HepG2 (cell line): ENCODE measurements at regions of chr7 and their contacts with region 1.

Region 1: DNA sequence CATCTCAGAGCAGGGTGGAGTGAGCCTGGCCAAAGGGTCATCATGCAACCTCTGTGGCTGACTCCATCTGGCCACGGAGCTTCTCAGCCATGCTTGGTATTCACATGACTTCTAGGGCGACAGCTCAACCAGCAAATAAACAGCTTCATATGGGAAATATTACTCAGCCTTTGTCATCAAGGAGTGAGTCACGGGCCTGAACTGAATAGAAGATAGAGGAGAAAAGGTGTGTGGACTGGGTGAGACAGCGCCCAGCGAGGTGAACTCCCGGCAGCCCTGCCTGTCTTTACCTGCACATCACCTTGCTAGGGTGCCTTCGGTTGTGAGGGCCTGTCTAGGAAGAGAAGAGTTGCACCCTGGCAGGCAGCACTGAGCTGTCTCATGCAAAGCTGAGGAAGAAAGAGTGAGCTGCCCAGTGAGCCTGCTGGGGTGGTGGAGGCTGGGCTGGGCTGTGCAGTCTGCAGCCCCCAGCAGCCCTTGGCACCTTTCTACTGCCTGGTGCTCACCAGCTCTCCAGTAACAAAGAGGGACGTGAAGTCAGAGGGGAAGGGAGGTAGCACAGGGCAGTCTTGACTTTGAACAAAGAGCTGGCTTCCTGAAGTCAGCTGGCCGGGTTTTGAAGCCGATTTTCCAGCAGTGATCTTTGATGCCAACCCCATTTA is 114.2 kb downstream of the EGFR start:
- DNase-seq: peak; percentile 75
- ATAC-seq: peak; percentile 54
- H3K4me3 ChIP-seq: peak overlapping the region in 2 of 3 experiments; percentile 2 to 63; a peak in 3 of 6 replicates
- H3K27ac ChIP-seq: peak overlapping the region; percentile 52
- H3K4me1 ChIP-seq: peaks cover 59% of the 10 kb centered on the region
- H3K27me3 ChIP-seq: no peaks in the 10 kb centered on the region
- CTCF ChIP-seq: no peak
- EP300 ChIP-seq: peak in 1 of 2 experiments; percentile 48; a peak in 1 of 4 replicates
- POLR2A ChIP-seq: no peak; a peak in 1 of 4 replicates
- RAD21 ChIP-seq: no peak

Region 2: DNA sequence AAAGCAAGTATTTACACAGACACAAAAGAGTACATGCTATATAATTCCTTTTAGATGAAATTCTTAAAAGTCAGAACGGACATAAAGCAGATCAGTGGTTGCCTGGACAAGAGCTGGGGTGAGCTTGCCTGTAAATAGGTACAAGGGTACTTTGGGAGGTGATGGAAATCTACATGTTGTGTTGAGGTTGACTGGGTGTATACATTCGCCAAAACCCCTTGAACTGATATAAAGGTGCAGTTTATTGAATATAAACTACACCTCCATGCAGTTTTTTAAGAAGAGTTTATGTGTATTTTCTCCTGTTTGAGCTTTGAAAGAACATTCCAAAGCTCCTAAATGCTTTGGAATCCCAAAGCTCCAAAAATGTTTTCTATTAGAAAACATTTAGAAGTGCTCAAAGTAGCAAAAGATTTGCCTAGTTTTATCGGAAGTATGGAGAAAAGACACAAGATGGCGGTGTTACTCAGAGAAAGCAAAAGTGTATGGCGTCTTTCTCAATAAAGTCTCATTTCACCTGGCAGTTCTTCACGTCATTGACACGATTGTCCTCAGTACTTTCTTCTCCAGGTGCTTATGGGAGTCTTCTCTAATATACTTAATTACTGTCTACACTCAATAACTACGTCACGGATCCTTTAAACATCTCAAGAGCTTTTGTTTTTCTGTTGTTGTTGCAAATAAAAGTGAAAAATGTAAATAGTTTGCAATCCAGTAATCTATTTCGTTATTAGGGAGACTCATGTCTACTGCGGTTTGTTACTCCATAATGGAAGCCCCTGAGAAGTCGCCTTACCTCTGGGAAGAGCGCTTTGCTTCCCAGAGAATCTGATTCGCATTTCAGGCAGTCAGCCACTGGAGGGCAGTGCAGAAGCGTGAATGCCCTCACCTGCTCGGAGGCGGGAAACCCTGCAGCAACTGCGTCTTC is 359.3 kb before region 1 on chr7:
- CTCF ChIA-PET with region 1: no interaction called
- POLR2A ChIA-PET with region 1: no interaction called
- in situ Hi-C with region 1: no loop called
- intact Hi-C with region 1: loop called (anchors 5 kb)
- DNase-seq: peak; percentile 73
- ATAC-seq: peak; percentile 96
- H3K4me3 ChIP-seq: peak overlapping the region in 1 of 3 experiments; percentile 19; a peak in 3 of 6 replicates
- H3K27ac ChIP-seq: no peak overlapping the region
- H3K4me1 ChIP-seq: peaks cover 4% of the 10 kb centered on the region; the same call in 1 of the 2 replicates
- H3K27me3 ChIP-seq: peaks cover 4 to 22% of the 10 kb centered on the region in 2 experiments; a peak in 2 of 5 replicates
- CTCF ChIP-seq: peak; percentile 92
- EP300 ChIP-seq: no peak
- POLR2A ChIP-seq: no peak
- RAD21 ChIP-seq: peak; percentile 84

Region 3: DNA sequence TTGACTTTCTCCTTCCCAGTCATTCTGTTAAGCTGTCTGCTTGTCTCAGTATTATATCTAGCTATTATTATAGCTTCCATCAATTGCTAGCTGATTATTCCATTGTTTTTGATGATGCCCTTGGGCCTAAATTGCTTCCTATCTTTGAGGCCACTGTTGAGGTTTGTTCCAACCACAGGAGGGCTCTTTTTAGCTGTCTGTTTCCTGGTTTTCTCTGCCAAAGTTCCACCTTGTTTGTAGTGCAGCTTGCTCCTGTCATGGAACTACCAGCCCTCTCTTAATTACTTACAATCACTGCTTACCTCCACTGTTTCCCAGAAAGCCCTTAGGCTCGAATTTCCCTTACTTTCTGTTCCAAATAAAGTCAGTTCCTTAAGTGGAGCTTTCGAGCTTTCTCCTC is 255.3 kb before region 1 on chr7:
- CTCF ChIA-PET with region 1: no interaction called
- POLR2A ChIA-PET with region 1: no interaction called
- in situ Hi-C with region 1: no loop called
- intact Hi-C with region 1: loop called (anchors 5 kb)
- DNase-seq: peak; percentile 24
- ATAC-seq: peak; percentile 77
- H3K4me3 ChIP-seq: no peak overlapping the region
- H3K27ac ChIP-seq: no peak overlapping the region
- H3K4me1 ChIP-seq: peaks cover 48% of the 10 kb centered on the region
- H3K27me3 ChIP-seq: no peaks in the 10 kb centered on the region
- CTCF ChIP-seq: peak; percentile 57
- EP300 ChIP-seq: no peak
- POLR2A ChIP-seq: no peak
- RAD21 ChIP-seq: no peak; the same call in 1 of the 2 replicates

Region 4: DNA sequence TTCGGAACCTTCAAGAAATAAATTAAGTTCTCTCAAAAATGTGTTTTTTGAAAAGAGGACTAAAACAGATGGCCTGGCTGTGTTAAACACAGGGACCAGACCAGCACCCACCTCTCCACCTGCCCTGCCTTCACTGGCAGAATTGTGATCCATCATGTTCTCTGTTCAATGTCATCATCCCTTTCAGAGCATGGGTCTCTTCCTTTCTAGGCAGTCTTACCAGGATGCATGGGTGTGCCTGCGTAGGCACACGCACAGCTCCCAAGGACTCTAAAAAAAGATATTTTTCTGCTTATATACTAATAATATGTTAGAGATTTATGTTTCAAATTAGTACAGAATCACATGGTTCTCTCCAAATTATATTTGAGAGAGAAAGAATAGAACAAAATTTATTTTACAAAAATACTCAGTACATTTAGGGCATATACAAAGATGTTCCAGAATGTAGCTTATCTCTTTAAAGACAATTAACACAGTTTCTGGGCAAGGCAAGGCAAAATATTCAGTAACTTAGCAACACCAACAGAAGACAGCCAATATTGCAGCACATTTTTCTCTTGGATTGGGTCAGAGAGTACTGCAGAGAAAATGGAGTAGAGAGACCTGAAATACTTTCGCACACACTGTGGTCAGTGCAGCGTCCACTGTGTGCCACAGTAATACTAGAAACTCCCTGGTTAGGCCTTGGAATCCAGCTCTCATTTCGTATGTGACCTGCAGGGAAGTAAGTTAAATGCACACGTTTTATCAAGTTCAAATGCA is 61.4 kb before region 1 on chr7:
- CTCF ChIA-PET with region 1: no interaction called
- POLR2A ChIA-PET with region 1: interaction called, 5 read pairs
- in situ Hi-C with region 1: no loop called
- intact Hi-C with region 1: loop called (anchors 1 kb)
- DNase-seq: no peak
- ATAC-seq: no peak
- H3K4me3 ChIP-seq: no peak overlapping the region
- H3K27ac ChIP-seq: peak overlapping the region; percentile 82
- H3K4me1 ChIP-seq: peaks cover 98% of the 10 kb centered on the region
- H3K27me3 ChIP-seq: no peaks in the 10 kb centered on the region
- CTCF ChIP-seq: no peak
- EP300 ChIP-seq: no peak
- POLR2A ChIP-seq: no peak
- RAD21 ChIP-seq: no peak

Region 5: GRCh38 chr7:55177589-55178261 is 44.7 kb after region 1 on chr7:
- CTCF ChIA-PET with region 1: no interaction called
- POLR2A ChIA-PET with region 1: interaction called, 30 read pairs
- in situ Hi-C with region 1: no loop called
- intact Hi-C with region 1: loop called (anchors 2 kb)
- DNase-seq: peak; percentile 94
- ATAC-seq: peak; percentile 74
- H3K4me3 ChIP-seq: peak overlapping the region; percentile 42 to 79 (median 49); a peak in 5 of 6 replicates
- H3K27ac ChIP-seq: peak overlapping the region; percentile 99
- H3K4me1 ChIP-seq: peaks cover 69% of the 10 kb centered on the region
- H3K27me3 ChIP-seq: no peaks in the 10 kb centered on the region; a peak in 1 of 5 replicates
- CTCF ChIP-seq: peak; percentile 30
- EP300 ChIP-seq: peak in 1 of 2 experiments; percentile 71; a peak in 2 of 4 replicates
- POLR2A ChIP-seq: peak in 1 of 2 experiments; percentile 64; a peak in 2 of 4 replicates
- RAD21 ChIP-seq: no peak